Activated B cell treated with CpG ODN at 0.5 μM for 24 hours (primary cell): ENCODE measurements at regions of chr14 and their contacts with region 1.

Region 1: DNA sequence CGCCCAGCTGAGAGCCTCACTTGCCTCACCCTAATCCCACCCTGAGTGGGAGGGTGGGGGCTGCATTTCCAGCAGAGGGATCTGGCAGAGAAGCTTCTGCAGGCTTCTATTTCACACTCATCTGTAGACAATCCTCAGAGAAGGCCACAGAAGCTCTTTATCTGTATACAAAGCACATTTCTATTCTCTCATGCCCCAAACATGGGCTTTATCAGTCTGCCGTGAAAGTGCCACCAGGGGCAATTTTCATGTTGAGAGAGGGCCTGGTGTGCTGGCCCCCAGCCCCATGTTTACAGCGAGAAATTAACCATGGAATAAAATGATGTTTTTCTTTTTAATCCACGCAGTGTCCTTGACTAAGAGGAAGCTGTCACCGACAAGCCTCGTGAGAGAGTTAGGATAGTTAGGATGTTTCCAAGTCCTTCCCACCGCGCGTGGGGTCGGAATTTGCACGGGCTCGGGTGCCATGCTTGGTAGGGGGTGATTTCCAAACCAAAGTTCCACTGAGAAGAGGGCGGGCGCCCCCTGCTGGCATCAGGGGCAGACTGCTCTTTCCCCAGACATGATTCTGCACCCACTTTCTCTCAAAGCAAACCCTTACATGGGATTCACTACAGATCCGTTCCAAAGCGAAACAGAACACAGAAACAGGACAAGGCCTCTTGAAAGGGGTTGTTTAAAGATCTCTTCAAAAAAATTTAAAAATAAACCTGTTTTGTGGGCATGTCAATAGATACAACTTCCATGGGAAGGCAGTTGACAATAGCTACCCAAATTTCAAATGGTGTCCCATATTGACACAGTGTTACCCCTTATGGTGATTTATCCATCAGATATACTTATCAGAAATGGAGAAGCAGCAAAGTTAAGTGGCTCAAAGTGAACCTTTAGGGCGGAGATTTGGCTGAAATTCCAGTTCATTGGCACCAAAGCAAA is 19.4 kb downstream of the BDKRB1 start:
- DNase-seq: peak; percentile 33
- ATAC-seq: no peak
- H3K4me3 Mint-ChIP-seq: no peak overlapping the region
- H3K27ac Mint-ChIP-seq: no peak overlapping the region
- H3K4me1 Mint-ChIP-seq: peaks cover 2% of the 10 kb centered on the region
- H3K27me3 Mint-ChIP-seq: no peaks in the 10 kb centered on the region
- CTCF ChIP-seq: no peak

Region 2: DNA sequence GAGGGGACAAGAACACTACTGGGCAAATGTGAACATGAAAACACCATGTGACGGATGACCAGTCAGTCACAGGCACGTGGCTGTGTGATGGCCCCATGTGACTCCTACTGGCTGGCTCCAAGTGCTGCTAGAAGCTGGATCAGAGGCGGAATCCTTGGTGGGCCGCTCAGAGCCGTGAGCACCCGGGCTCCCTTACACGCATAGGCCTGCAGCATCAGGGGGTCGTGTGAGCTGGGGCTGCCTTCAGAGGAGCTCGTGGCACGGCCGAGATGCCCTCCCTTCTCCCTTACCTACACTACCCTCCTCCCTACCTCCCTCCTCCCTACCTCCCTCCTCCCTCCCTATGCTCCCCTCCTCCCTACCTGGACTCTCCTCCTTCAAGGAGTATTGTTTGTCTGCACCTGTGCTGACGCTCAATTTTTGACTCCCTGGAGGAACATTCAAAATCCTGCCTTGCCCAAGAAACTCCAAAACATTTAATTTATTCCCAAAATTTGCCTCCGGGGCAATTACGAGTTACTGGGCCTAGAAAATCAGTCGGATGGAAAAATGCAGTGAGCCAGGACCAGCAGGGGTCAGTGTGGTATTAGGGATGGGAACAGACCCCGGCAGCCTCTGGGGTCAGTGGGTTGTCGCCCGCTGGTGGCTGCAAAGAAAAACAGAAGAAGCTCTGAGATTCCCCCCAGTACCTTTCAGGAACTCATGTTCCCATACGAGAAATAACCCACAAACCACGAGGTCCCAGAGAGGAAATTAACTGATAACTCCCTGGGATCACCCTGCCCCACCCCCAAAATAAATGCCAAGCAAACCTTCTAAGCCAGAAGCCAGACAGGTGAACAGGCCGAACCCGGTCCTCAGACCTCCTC is 175.1 kb before region 1 on chr14:
- CTCF ChIA-PET with region 1: interaction called, 8 read pairs
- POLR2A ChIA-PET with region 1: no interaction called
- intact Hi-C with region 1: loop called (anchors 1 kb)
- DNase-seq: no peak
- ATAC-seq: no peak
- H3K4me3 Mint-ChIP-seq: no peak overlapping the region
- H3K27ac Mint-ChIP-seq: no peak overlapping the region
- H3K4me1 Mint-ChIP-seq: peaks cover 2% of the 10 kb centered on the region
- H3K27me3 Mint-ChIP-seq: no peaks in the 10 kb centered on the region
- CTCF ChIP-seq: no peak

Region 3: DNA sequence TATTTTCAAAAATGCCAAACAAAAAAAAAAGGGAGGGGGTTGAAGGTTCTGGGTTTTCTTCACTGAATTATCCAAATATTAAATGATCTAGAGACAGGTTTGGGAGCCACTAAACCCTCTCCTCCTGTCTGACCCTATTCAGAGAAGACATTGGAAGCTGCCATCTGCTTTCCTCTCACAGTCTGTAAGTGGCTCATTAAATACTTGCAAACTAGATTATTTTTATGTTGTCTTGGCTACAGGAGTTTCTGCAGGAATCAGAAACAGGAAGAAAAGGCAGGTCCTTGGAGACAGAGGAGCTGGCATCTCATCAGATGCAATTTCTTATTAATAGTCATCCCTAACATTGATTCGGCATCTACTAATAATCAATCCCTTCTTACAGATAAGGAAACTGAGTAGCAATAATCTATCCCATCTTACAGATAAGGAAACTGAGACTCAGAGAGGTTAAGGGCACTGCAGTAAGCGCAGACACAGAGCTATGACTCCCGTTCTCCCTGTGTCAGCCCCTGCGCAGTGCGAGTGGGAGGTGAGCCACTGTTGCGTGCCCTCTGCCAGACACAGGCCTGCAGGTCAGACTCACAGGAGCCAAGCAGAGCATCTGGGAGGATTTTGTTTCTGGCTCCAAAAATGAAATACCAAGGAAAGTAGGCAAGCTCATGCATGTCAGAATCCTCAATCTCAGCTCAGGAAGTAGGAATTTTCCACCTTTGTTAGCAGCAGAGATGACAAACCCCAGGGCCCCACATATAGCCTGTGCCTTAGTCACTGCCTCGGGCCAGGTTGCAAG is 59.8 kb before region 1 on chr14:
- CTCF ChIA-PET with region 1: no interaction called
- POLR2A ChIA-PET with region 1: no interaction called
- intact Hi-C with region 1: no loop called
- DNase-seq: no peak
- ATAC-seq: no peak
- H3K4me3 Mint-ChIP-seq: no peak overlapping the region
- H3K27ac Mint-ChIP-seq: no peak overlapping the region
- H3K4me1 Mint-ChIP-seq: no peaks in the 10 kb centered on the region
- H3K27me3 Mint-ChIP-seq: peaks cover 4% of the 10 kb centered on the region
- CTCF ChIP-seq: no peak